Activated CD4-positive, alpha-beta T cell treated with anti-CD3 and anti-CD28 coated beads for 36 hours (primary cell): ENCODE measurements at regions of chr6 and their contacts with region 1.

Region 1: GRCh38 chr6:11424395-11425050 is 113.0 kb upstream of the TMEM170B start:
- DNase-seq: no peak
- ATAC-seq: no peak
- H3K4me3 Mint-ChIP-seq: no peak overlapping the region
- H3K27ac Mint-ChIP-seq: no peak overlapping the region
- H3K4me1 Mint-ChIP-seq: peaks cover 40% of the 10 kb centered on the region
- H3K27me3 Mint-ChIP-seq: no peaks in the 10 kb centered on the region

Region 2: GRCh38 chr6:11445146-11445545 is 20.6 kb after region 1 on chr6:
- CTCF ChIA-PET with region 1: interaction called, 3 read pairs
- POLR2A ChIA-PET with region 1: no interaction called
- intact Hi-C with region 1: loop called in 1 of 2 experiments (anchors 2 kb)
- DNase-seq: no peak
- ATAC-seq: no peak
- H3K4me3 Mint-ChIP-seq: no peak overlapping the region
- H3K27ac Mint-ChIP-seq: no peak overlapping the region
- H3K4me1 Mint-ChIP-seq: peaks cover 29% of the 10 kb centered on the region
- H3K27me3 Mint-ChIP-seq: peaks cover 2% of the 10 kb centered on the region